ENCODE measurements at regions of chr16 and their contacts with region 1.

Region 1: GRCh38 chr16:1942810-1943726 is at the start of gene MSRB1:
- DNase-seq: peak; percentile 99 to 100
- H3K4me3 ChIP-seq: peak within 1 kb of the TSS; percentile 70 to 92
- H3K27ac ChIP-seq: peak within 1 kb of the TSS; percentile 78 to 81
- H3K4me1 ChIP-seq: peaks cover 10 to 11% of the 10 kb centered on the region in 2 donors
- H3K27me3 ChIP-seq: no peaks in the 10 kb centered on the region
- CTCF ChIP-seq: no peak
- total RNA-seq, gene MSRB1: 32.9 TPM

Region 2: GRCh38 chr16:1713933-1714332 is 229.1 kb before region 1 on chr16:
- intact Hi-C with region 1: no loop called
- DNase-seq: no peak
- H3K4me3 ChIP-seq: no peak overlapping the region
- H3K27ac ChIP-seq: no peak overlapping the region
- H3K4me1 ChIP-seq: no peaks in the 10 kb centered on the region
- H3K27me3 ChIP-seq: no peaks in the 10 kb centered on the region
- CTCF ChIP-seq: no peak

Region 3: GRCh38 chr16:1959269-1960049 is 16.4 kb after region 1 on chr16 and contains the start of gene NDUFB10:
- intact Hi-C with region 1: loop called (anchors 2 kb)
- DNase-seq: peak; percentile 52 to 94
- H3K4me3 ChIP-seq: peak within 1 kb of the TSS; percentile 86 to 90
- H3K27ac ChIP-seq: peak within 1 kb of the TSS; percentile 74 to 80
- H3K4me1 ChIP-seq: peaks cover 3 to 20% of the 10 kb centered on the region in 2 donors
- H3K27me3 ChIP-seq: no peaks in the 10 kb centered on the region
- CTCF ChIP-seq: peak; percentile 50 to 78 (median 57)
- total RNA-seq, gene NDUFB10: 68.2 TPM

Measured in ascending aorta (tissue), 2 donors.